ENCODE measurements at regions of chr21 and their contacts with region 1.

Region 1: GRCh38 chr21:42145569-42146272 is 73.2 kb upstream of the ABCG1 start:
- DNase-seq: no peak
- H3K4me3 ChIP-seq: no peak overlapping the region
- H3K27ac ChIP-seq: no peak overlapping the region
- H3K4me1 ChIP-seq: peaks cover 0 to 6% (median 4%) of the 10 kb centered on the region in 4 donors
- H3K27me3 ChIP-seq: peaks cover 0 to 12% (median 0%) of the 10 kb centered on the region in 4 donors
- CTCF ChIP-seq: peak; percentile 91 to 96 (median 92)
- EP300 ChIP-seq: no peak
- POLR2A ChIP-seq: no peak

Region 2: DNA sequence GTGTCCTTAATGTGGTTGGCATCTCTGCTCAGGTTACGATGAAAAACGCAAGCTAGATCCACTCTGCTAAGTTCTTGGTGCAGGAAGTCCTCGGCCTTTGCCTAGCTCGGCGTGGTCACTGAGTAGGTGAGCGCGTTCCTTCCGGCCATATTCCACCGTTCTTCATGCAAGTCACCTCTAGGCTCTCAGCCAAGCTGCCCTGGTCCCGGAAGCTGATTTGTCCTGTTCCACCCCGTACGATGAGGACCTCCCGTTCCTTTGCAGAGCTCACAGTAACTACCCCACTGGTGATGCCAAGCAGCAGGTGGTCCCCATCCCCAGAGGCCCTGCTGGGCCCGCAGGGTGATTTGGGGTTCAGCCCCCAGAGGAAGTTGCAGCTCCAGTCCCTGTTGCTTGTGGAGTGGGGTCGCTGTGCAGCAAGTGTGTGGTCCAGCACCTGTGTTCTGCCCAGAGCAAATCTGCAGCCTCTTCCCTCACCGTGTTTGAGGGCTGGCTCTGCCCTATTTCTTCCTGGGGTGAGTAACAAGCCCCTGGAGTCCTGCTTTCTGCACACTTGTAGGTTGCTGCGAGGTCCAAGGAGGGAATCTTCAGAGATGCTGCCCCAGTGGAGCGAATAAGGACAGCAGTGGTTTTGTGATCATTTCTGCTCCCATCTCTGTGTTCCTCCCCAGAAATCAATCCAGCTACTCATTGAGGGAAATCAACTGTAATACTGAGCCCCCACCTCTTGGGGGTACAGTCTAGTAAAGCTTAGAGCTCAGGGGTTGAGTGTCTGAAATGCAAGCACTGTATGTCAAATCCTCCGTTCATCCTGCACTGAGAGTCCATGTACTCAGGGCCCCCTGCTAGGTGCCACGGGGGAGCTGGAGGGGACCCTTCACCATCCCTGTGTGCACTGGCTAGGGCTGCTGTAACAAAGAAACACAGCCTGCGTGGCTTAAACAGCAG is 72.3 kb before region 1 on chr21:
- intact Hi-C with region 1: no loop called
- DNase-seq: no peak
- H3K4me3 ChIP-seq: no peak overlapping the region
- H3K27ac ChIP-seq: no peak overlapping the region
- H3K4me1 ChIP-seq: no peaks in the 10 kb centered on the region
- H3K27me3 ChIP-seq: peaks cover 0 to 41% (median 0%) of the 10 kb centered on the region in 4 donors
- CTCF ChIP-seq: no peak
- EP300 ChIP-seq: no peak
- POLR2A ChIP-seq: no peak

Region 3: GRCh38 chr21:42258153-42258884 is 112.6 kb after region 1 on chr21:
- intact Hi-C with region 1: loop called (anchors 1 kb)
- DNase-seq: no peak
- H3K4me3 ChIP-seq: no peak overlapping the region
- H3K27ac ChIP-seq: no peak overlapping the region
- H3K4me1 ChIP-seq: peaks cover 35 to 76% (median 69%) of the 10 kb centered on the region in 4 donors
- H3K27me3 ChIP-seq: no peaks in the 10 kb centered on the region
- CTCF ChIP-seq: peak; percentile 71 to 85 (median 76)
- EP300 ChIP-seq: no peak
- POLR2A ChIP-seq: no peak

Region 4: DNA sequence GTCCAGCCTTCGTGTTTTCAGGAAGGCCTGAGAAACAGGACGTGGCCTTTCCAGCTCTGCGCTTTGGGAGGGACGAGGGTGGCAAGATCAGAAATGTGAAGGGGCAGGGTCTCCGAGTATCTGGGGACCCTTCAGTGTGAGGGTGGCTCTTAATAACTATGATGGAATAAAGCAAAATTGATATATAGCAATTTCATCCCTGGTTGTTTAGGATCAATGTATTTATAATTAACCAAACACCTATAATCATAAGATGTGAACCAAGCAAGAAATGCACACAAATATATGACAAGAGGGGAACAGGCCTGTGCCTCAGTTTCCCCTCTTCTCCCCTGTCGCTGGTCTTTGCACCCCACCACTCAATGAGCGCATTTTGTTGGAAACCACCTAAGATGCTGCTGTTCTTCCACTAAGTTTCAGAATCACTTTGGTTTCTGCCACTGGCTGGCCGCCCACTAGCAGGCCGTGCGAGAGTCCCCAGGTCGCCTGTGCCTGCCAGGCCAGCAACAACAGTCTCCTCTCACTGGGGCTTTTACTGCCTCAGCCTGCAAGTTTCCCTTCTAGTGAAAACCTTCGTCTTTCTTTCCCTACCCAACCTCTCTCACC is 294.6 kb after region 1 on chr21:
- intact Hi-C with region 1: loop called (anchors 10 kb)
- DNase-seq: no peak
- H3K4me3 ChIP-seq: no peak overlapping the region
- H3K27ac ChIP-seq: no peak overlapping the region
- H3K4me1 ChIP-seq: no peaks in the 10 kb centered on the region
- H3K27me3 ChIP-seq: peaks cover 0 to 32% (median 0%) of the 10 kb centered on the region in 4 donors
- CTCF ChIP-seq: no peak
- EP300 ChIP-seq: no peak
- POLR2A ChIP-seq: no peak